ENCODE measurements at regions of chr21 and their contacts with region 1.

Region 1: GRCh38 chr21:18970416-18970815 is 566.8 kb upstream of the TMPRSS15 start:
- DNase-seq: no peak
- ATAC-seq: no peak
- H3K4me3 ChIP-seq: no peak overlapping the region
- H3K27ac ChIP-seq: no peak overlapping the region
- H3K4me1 ChIP-seq: no peaks in the 10 kb centered on the region
- H3K27me3 ChIP-seq: no peaks in the 10 kb centered on the region
- CTCF ChIP-seq: no peak

Region 2: GRCh38 chr21:18985584-18985983 is 15.2 kb after region 1 on chr21:
- CTCF ChIA-PET with region 1: no interaction called
- POLR2A ChIA-PET with region 1: interaction called, 13 read pairs
- intact Hi-C with region 1: no loop called
- DNase-seq: peak; percentile 36
- ATAC-seq: peak; percentile 22
- H3K4me3 ChIP-seq: no peak overlapping the region
- H3K27ac ChIP-seq: no peak overlapping the region
- H3K4me1 ChIP-seq: no peaks in the 10 kb centered on the region
- H3K27me3 ChIP-seq: peaks cover 35% of the 10 kb centered on the region
- CTCF ChIP-seq: no peak

Region 3: DNA sequence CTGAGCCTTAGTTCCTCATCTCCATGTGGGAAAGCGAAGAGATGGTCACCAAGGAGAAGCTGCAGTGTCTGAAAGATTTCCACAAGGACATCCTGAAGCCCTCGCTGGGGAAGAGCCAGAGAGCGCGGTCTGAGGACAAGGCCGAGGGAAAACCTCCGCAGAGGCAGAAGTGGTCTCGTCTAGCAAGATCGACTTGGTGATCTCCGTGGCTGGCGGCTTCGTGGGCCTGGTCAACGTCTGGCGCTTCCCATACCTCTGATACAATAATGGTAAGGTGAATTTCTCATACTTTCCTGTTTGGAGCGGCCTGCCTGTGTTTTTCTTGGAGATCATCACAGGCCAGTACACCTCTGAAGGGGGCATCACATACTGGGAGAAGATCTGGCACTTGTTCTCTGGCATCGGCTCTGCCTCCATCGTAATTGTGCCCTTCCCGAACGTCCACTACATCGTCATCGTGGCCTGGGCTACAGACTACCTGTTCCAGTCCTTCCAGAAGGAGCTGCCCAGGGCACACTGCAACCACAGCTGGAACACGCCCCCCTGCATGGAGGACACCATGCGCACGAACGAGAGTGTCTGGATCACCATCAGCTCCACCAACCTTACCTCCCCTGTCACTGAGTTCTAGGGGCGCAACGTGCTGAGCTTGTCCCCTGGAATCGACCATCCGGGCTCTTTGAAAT is 274.2 kb after region 1 on chr21:
- CTCF ChIA-PET with region 1: no interaction called
- POLR2A ChIA-PET with region 1: no interaction called
- intact Hi-C with region 1: no loop called
- DNase-seq: no peak
- ATAC-seq: no peak
- H3K4me3 ChIP-seq: no peak overlapping the region
- H3K27ac ChIP-seq: no peak overlapping the region
- H3K4me1 ChIP-seq: no peaks in the 10 kb centered on the region
- H3K27me3 ChIP-seq: no peaks in the 10 kb centered on the region
- CTCF ChIP-seq: no peak

Measured in PC-3 (cell line).